ENCODE measurements at regions of chr11 and their contacts with region 1.

Region 1: DNA sequence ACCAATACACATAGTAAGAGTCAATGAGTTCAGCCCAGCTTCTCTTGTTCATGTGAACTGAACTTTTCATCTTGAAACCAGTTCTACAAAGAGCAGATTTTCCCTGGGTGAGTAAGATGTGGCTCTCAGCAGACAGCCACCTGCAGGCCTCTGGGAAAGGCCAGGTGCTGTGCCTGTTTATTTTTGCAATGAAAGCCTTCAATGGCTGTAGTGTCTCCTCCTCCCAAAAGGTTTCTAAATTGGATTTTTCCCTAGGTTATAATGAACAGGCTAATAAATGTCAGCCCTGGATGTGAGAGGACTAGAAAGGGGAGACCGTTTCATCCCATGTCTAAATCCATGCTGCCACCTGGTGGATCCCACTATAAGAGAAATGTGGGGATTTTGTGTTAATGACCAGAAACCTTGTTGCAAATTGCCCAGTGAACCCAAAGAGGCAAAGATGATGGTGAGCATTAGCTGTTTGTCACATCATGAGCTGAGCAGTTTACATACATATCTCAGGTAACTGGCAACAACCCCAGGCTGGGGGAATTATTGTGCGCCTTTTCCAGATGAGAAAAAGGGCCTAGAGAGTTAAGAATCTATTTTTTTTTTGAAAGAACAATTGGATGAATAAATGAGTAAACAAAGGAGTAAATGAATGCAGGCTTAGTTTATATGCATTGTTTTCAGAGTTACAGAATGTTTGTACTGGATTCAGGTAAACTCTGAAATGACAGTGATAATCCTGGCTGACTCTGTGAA is 12.7 kb downstream of the C11orf91 start:
- DNase-seq: peak in 1 of 2 donors; percentile 51
- ATAC-seq: no peak

Region 2: GRCh38 chr11:33445761-33446161 is 242.1 kb before region 1 on chr11:
- intact Hi-C with region 1: no loop called
- DNase-seq: no peak
- ATAC-seq: no peak

Region 3: GRCh38 chr11:33598426-33599069 is 89.4 kb before region 1 on chr11:
- intact Hi-C with region 1: no loop called
- DNase-seq: no peak
- ATAC-seq: no peak

Region 4: DNA sequence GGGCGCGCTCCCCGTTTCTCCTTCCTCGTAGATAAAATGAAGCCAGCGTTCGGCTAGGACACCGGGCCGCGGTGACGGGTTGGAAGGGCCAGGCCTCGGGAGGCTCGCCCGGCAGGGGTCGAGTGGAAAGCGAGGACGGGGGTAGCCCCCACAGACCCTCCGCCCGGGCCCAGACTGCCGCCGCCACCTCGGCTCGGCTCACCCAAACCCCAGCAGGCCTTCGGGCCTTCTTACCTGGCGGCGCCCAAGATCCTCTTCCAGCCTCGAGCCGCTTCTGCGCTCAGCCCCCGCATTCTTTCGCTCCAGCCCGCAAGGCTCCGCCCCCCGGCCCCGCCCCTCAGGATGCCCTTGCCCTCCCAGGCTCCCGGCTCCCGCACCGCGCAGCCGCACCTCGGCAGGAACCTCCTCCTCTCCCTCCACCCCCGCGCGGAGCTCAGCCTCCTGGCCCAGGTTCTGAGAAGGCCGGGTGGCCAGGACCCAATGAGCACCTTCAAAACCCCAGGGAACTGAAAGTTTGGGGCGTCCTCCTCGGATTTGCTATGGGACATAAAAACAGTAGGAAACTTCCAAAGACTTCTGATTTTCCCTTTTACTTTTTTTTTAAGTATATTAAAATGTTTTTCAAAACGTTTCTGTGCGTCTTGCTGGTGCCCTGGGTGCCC is 48.4 kb after region 1 on chr11 and contains the start of gene CD59:
- intact Hi-C with region 1: loop called in 1 of 2 experiments (anchors 5 kb)
- DNase-seq: peak; percentile 97 to 99
- ATAC-seq: peak; percentile 90
- total RNA-seq, gene CD59: 271 to 585 TPM